CD8-positive, alpha-beta memory T cell (primary cell): ENCODE measurements at regions of chr14 and their contacts with region 1.

Region 1: DNA sequence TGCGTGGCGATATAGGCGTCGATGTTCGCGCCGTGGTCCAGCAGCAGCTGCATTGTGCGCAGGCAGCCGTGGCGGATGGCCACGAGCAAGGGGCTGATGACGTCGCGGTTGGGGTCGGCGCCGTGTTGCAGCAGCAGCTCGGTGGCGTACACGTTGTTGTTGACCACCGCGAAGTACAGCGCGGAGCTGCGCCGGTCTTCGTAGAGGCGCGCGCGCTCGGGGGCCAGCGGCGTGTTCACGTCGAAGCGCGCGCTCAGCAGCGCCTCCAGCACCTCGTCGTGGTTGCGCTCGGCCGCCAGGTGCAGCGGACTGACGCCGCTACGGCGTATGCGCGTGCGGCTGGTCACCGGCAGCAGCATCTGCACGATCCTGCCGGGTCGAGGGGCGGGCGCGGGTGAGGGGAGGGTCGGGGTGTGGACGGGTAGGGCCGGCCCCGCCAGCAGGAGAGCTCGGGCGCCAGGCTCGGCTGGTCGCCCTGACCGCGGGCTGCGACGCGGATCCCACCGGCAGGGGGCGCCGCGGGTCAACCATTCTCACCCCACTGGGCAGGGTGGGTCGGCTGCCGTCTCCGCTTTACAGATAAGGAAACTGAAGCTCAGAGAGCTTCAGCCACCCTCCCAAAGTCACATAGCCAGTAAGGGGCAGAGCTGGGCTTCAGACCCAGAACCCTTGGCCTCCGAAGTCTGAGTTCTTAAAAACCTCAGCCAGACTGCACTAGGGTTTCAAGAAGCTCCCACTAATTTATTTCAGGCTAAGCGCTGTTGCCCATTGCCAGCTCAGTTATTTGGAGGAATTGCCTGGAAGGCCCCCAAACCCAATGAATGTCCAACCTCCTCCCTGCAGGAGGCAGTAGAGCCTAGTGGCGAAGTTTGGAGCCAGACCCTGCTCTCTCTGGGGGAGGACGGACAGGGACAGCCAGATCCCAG is 12.4 kb downstream of the FAM181A start:
- DNase-seq: peak; percentile 81 to 91 (median 85)
- H3K4me3 ChIP-seq: peak overlapping the region; percentile 45
- H3K4me3 Mint-ChIP-seq: peak overlapping the region; percentile 26 to 87 (median 56)
- H3K27ac ChIP-seq: no peak overlapping the region
- H3K27ac Mint-ChIP-seq: peak overlapping the region in 4 of 8 donors; percentile 23 to 70 (median 31)
- H3K4me1 ChIP-seq: no peaks in the 10 kb centered on the region
- H3K4me1 Mint-ChIP-seq: peaks cover 5 to 21% (median 6%) of the 10 kb centered on the region in 3 donors
- H3K27me3 ChIP-seq: no peaks in the 10 kb centered on the region
- H3K27me3 Mint-ChIP-seq: peaks cover 0 to 4% of the 10 kb centered on the region in 2 donors

Region 2: DNA sequence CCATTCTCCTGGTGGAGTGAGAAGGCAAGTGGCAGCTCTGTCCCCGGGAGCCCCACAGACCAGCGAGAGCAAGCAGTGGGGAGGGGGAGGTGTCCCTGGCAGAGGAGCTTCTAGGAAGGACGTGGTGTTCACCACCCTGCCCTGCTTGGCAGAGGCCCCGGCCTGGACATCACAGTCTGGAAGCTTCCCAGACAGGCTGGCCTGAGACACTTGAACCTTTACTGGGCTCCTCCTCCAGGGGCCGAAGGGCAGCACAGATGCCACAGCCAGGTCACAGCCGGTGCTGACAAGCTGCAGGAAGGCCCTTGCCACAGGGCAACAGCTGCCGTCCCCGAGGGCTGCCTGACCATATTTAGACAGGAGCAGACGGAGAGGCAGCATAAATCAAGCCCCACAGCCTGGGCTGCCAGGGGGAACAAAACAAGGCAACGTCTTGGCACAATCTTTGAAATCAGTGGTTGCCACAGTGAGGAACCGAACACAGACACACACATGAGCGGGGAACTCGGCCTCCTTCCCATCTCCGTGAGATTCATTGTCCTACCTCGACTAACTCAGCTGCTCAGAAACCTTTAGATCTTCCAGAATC is 179.8 kb before region 1 on chr14:
- CTCF ChIA-PET with region 1: no interaction called
- POLR2A ChIA-PET with region 1: no interaction called
- DNase-seq: no peak
- H3K4me3 ChIP-seq: no peak overlapping the region
- H3K4me3 Mint-ChIP-seq: no peak overlapping the region
- H3K27ac ChIP-seq: no peak overlapping the region
- H3K27ac Mint-ChIP-seq: no peak overlapping the region
- H3K4me1 ChIP-seq: no peaks in the 10 kb centered on the region
- H3K4me1 Mint-ChIP-seq: no peaks in the 10 kb centered on the region
- H3K27me3 ChIP-seq: no peaks in the 10 kb centered on the region
- H3K27me3 Mint-ChIP-seq: peaks cover 7 to 18% of the 10 kb centered on the region in 2 donors

Region 3: DNA sequence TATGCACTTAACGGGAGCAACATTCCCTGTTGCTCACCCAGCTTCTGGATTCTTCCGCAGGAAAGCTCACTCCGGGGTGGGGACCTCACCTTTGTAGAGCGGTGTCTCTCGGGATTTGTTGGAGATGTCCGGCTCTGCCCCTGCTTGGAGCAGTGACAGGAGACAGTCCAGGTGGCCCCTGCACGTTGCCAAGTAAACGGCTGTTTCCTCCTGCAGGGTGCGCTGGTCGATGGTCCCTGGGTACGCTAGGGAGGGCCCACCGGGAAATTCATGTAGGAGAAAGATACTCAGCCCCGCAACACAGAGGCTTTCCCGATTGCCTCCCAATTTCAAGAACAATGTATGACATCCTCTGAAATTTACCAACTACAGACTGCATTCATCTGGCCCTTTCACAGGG is 13.7 kb after region 1 on chr14:
- CTCF ChIA-PET with region 1: interaction called, 945 read pairs
- POLR2A ChIA-PET with region 1: no interaction called
- DNase-seq: peak in 1 of 5 donors; percentile 62
- H3K4me3 ChIP-seq: no peak overlapping the region
- H3K4me3 Mint-ChIP-seq: peak overlapping the region; percentile 41 to 92 (median 84)
- H3K27ac ChIP-seq: no peak overlapping the region
- H3K27ac Mint-ChIP-seq: peak overlapping the region; percentile 23 to 99 (median 54)
- H3K4me1 ChIP-seq: peaks cover 53% of the 10 kb centered on the region
- H3K4me1 Mint-ChIP-seq: peaks cover 51 to 73% (median 57%) of the 10 kb centered on the region in 3 donors
- H3K27me3 ChIP-seq: no peaks in the 10 kb centered on the region
- H3K27me3 Mint-ChIP-seq: no peaks in the 10 kb centered on the region

Region 4: GRCh38 chr14:93994919-93995682 is 55.5 kb after region 1 on chr14:
- CTCF ChIA-PET with region 1: interaction called, 272 read pairs
- POLR2A ChIA-PET with region 1: interaction called, 8 read pairs
- DNase-seq: no peak
- H3K4me3 ChIP-seq: no peak overlapping the region
- H3K4me3 Mint-ChIP-seq: no peak overlapping the region
- H3K27ac ChIP-seq: no peak overlapping the region
- H3K27ac Mint-ChIP-seq: no peak overlapping the region
- H3K4me1 ChIP-seq: no peaks in the 10 kb centered on the region
- H3K4me1 Mint-ChIP-seq: peaks cover 0 to 4% (median 0%) of the 10 kb centered on the region in 3 donors
- H3K27me3 ChIP-seq: no peaks in the 10 kb centered on the region
- H3K27me3 Mint-ChIP-seq: peaks cover 0 to 2% of the 10 kb centered on the region in 2 donors

Region 5: DNA sequence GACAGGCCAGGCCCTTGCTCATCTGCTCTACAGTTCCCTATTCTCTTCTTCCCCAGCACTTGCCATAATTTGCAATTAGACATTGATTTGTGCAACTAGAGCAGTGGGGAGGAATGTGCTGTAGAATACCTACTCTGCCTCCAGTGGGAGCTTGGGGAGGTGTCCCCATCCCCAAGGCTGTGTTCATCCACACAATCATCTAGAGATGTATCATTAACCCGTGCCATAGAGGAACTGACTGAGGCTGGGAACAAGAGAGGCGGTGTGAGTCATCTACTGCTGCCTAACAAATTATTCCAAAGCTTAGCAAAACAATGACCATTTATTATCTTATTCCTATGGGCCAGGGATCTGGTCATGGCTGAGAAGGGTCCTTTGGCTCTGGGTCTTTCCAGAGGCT is 81.4 kb after region 1 on chr14:
- CTCF ChIA-PET with region 1: interaction called, 29 read pairs
- POLR2A ChIA-PET with region 1: interaction called, 4 read pairs
- DNase-seq: no peak
- H3K4me3 ChIP-seq: no peak overlapping the region
- H3K4me3 Mint-ChIP-seq: no peak overlapping the region
- H3K27ac ChIP-seq: no peak overlapping the region
- H3K27ac Mint-ChIP-seq: no peak overlapping the region
- H3K4me1 ChIP-seq: peaks cover 5% of the 10 kb centered on the region
- H3K4me1 Mint-ChIP-seq: peaks cover 7 to 22% (median 19%) of the 10 kb centered on the region in 3 donors
- H3K27me3 ChIP-seq: no peaks in the 10 kb centered on the region
- H3K27me3 Mint-ChIP-seq: peaks cover 3% of the 10 kb centered on the region in 2 donors

Region 6: DNA sequence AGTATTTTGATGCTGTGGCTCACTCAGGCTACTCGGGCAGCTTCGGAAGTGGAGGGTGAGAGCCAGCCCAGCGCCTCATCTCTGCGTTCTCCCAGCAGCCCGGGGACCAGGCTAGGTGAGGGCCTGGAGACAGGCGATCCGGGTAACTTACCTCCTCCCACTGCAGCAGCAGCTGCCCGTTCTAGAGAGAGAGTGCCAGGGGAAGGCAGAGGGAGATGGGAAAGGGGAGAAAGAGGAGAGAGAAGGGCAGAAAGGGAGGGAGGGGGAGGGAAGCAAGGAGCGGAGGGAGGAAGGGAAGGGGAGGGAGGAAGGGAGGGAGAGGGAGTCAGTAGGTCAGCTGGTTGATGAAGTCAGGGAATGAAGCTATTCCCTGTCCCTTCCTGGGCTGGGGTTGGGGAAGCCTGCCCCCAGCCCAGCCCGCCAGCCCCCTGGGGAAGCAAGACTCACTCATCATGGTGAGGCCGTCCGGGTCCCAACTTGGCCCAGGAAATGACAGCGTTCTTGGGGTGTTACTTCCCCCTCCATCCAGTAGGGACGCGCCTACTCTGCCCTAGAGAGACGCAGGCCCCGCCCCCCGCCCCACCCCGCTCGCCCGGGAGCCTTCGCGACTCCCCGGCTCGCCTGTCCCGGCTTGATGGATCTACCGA is 189.7 kb after region 1 on chr14 and contains the start of gene IFI27L2:
- CTCF ChIA-PET with region 1: interaction called, 43 read pairs
- POLR2A ChIA-PET with region 1: no interaction called
- DNase-seq: peak; percentile 45 to 80 (median 66)
- H3K4me3 ChIP-seq: peak within 1 kb of the TSS; percentile 85
- H3K4me3 Mint-ChIP-seq: peak within 1 kb of the TSS; percentile 83 to 98 (median 87)
- H3K27ac ChIP-seq: peak within 1 kb of the TSS; percentile 63
- H3K27ac Mint-ChIP-seq: peak within 1 kb of the TSS; percentile 55 to 93 (median 74)
- H3K4me1 ChIP-seq: peaks cover 16% of the 10 kb centered on the region
- H3K4me1 Mint-ChIP-seq: peaks cover 14 to 25% (median 19%) of the 10 kb centered on the region in 3 donors
- H3K27me3 ChIP-seq: no peaks in the 10 kb centered on the region
- H3K27me3 Mint-ChIP-seq: peaks cover 5 to 6% of the 10 kb centered on the region in 2 donors
- total RNA-seq, gene IFI27L2: 55.9 to 58.5 TPM

Region 7: DNA sequence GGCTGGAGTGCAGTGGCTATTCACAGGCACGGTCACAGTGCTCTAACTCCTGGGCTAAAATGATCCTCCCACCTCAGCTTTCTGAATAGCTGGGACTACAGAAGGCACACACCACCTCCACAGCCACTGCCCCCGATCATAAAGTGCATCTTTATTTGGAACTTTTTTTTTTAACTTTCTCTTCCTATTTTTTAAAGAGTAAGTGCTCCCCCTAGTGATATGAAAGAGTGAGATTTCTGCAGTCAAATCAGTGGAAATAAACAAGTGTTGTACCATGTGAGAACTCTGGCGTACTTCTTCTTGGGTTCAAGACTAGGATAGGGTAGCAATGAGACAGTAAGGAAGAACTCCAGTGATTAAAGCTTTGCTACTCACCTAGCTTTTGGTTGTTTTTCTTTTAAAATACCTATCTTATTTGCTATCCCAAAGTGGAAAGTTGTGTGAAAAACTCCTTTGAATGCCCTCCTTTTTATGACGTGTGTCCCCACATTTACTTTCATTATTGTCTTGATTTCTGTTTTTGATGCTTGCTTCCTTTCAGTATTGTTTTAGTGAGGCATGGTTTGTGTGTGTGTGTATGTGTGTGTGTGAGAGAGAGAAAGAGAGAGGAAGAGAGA is 241.2 kb after region 1 on chr14:
- CTCF ChIA-PET with region 1: interaction called, 18 read pairs
- POLR2A ChIA-PET with region 1: no interaction called
- DNase-seq: peak in 2 of 5 donors; percentile 62 to 63
- H3K4me3 ChIP-seq: no peak overlapping the region
- H3K4me3 Mint-ChIP-seq: peak overlapping the region; percentile 30 to 68 (median 40)
- H3K27ac ChIP-seq: peak overlapping the region; percentile 40
- H3K27ac Mint-ChIP-seq: peak overlapping the region; percentile 15 to 87 (median 45)
- H3K4me1 ChIP-seq: no peaks in the 10 kb centered on the region
- H3K4me1 Mint-ChIP-seq: peaks cover 9 to 22% (median 18%) of the 10 kb centered on the region in 3 donors
- H3K27me3 ChIP-seq: no peaks in the 10 kb centered on the region
- H3K27me3 Mint-ChIP-seq: peaks cover 13 to 37% of the 10 kb centered on the region in 2 donors